ENCODE measurements at regions of chr5 and their contacts with region 1.

Region 1: DNA sequence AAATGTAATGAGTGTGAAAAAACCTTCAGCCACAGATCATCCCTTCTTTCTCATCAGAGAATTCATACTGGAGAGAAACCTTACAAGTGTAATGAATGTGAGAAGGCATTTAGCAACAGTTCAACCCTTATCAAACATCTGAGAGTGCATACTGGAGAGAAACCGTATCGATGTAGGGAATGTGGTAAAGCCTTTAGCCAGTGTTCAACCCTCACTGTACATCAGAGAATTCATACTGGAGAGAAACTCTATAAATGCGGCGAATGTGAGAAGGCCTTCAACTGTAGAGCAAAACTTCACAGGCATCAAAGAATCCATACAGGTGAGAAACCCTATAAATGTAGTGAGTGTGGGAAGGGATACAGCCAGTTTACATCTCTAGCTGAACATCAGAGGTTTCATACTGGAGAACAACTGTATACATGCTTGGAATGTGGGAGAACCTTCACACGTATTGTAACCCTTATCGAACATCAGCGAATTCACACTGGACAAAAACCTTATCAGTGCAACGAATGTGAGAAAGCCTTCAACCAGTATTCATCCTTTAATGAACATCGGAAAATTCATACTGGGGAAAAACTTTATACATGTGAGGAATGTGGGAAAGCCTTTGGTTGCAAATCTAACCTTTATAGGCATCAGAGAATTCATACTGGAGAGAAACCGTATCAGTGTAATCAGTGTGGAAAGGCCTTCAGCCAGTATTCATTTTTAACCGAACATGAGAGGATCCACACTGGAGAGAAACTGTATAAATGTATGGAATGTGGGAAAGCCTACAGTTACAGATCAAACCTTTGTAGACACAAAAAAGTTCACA is 19.2 kb downstream of the ZNF354C start:
- DNase-seq: no peak
- H3K4me3 ChIP-seq: peak overlapping the region in 1 of 4 donors; percentile 14
- H3K27ac ChIP-seq: no peak overlapping the region
- H3K4me1 ChIP-seq: no peaks in the 10 kb centered on the region
- H3K27me3 ChIP-seq: no peaks in the 10 kb centered on the region
- CTCF ChIP-seq: no peak
- POLR2A ChIP-seq: no peak

Region 2: DNA sequence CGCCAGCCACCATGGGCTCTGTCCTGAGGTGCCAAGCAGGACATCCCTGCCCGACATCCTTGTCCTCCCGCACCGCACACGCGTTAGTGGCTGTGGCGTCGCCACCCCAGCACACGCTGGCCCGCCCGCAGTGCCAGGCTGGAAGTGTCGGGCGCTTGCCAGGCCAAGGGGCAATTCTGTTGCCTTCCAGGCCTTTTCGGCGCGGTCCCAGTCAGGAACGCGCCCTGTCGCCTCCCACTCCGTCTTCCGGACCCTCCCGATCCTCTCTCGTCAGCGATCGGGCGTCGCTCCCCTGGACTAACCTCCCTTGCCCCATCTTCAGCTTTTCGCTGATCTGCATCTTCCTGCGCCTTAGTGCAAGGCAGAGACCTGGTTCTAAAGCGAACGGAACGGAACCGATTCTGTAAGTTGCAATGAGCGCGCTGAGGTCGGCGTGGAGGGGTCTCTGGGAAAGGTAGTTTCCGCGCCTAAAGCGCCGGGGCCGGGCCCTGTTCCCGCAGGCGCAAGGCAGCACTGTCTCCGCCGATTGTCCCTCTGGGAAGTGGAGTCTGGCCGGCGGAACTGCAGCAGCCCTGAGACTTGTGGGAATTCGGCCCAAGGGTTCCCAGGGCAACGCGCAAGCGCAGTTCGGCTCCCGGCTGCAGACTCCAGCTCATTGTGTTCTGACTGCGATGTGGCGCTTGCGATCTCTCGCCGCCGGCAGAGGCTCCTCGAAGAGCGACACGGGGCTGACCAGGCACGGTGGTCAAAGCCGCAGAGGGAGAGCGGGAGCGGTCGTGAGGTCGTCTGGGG is 138.6 kb before region 1 on chr5 and contains the start of gene ZNF454:
- intact Hi-C with region 1: loop called in 1 of 2 experiments (anchors 10 kb)
- DNase-seq: peak; percentile 71 to 94 (median 79)
- H3K4me3 ChIP-seq: peak within 1 kb of the TSS in 1 of 4 donors; percentile 57
- H3K27ac ChIP-seq: peak within 1 kb of the TSS in 2 of 5 donors; percentile 56 to 76
- H3K4me1 ChIP-seq: no peaks in the 10 kb centered on the region
- H3K27me3 ChIP-seq: no peaks in the 10 kb centered on the region
- CTCF ChIP-seq: no peak
- POLR2A ChIP-seq: peak in 1 of 2 donors; percentile 16
- total RNA-seq, gene ZNF454: 0.54 to 2.2 (median 1.3) TPM